Activated T-helper 2 cell treated with anti-CD3 and anti-CD28 coated beads, Interferon-gamma antibody, Interleukin-2, Interleukin-4, amounts not matched to agents 10 μg/mL and 5 μg/mL and 100 μg/mL, durations not matched to agents 14 hours and 24 hours and 36 hours (primary cell): ENCODE measurements at regions of chr6 and their contacts with region 1.

Region 1: DNA sequence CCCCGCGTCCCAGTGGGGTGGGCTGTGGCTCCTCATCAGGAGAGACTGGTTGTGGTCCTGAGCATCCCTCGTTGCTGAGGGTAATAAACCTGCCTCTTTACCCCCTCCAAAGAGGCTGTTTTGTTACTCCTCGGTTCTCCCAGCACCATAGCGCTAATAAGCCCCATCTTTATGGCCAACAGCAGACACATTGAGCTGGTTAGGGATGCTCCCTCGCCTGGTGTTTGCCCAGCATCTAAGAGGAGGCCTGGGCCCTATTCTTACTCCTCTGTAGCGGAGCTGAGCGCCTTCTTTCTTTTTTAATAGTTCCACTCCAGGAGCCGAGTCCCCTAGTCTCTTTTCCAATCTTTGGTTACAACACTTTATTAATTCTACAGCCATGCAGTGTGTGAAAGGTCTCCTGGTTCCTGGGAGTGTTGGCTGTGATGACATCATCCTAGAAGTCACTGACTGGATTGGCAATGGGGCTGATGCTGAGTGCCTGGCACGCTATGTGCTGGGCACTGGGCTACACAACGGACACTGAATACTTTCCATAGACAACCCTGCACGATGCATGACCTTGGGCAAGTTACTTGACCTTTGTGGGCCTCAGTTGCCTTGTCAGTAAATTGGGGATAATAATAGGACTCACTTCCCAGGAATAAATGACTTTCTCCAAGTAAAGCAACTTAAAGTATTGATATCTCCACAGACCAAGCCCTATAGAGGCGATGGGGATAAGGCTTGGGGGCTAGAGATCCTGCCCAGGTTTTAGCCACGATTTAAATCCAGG is 50.7 kb upstream of the CCDC167 start:
- DNase-seq: no peak
- H3K4me3 Mint-ChIP-seq: no peak overlapping the region
- H3K27ac Mint-ChIP-seq: no peak overlapping the region
- H3K4me1 Mint-ChIP-seq: peaks cover 29% of the 10 kb centered on the region
- H3K27me3 Mint-ChIP-seq: peaks cover 2% of the 10 kb centered on the region

Region 2: GRCh38 chr6:37499433-37500293 is 50.7 kb before region 1 on chr6 and contains the start of gene CCDC167:
- intact Hi-C with region 1: loop called (anchors 1 kb)
- DNase-seq: peak; percentile 96
- H3K4me3 Mint-ChIP-seq: peak within 1 kb of the TSS; percentile 93
- H3K27ac Mint-ChIP-seq: peak within 1 kb of the TSS; percentile 96
- H3K4me1 Mint-ChIP-seq: peaks cover 64% of the 10 kb centered on the region
- H3K27me3 Mint-ChIP-seq: no peaks in the 10 kb centered on the region
- total RNA-seq, gene CCDC167: 69.8 and 76.9 TPM in 2 replicates

Region 3: DNA sequence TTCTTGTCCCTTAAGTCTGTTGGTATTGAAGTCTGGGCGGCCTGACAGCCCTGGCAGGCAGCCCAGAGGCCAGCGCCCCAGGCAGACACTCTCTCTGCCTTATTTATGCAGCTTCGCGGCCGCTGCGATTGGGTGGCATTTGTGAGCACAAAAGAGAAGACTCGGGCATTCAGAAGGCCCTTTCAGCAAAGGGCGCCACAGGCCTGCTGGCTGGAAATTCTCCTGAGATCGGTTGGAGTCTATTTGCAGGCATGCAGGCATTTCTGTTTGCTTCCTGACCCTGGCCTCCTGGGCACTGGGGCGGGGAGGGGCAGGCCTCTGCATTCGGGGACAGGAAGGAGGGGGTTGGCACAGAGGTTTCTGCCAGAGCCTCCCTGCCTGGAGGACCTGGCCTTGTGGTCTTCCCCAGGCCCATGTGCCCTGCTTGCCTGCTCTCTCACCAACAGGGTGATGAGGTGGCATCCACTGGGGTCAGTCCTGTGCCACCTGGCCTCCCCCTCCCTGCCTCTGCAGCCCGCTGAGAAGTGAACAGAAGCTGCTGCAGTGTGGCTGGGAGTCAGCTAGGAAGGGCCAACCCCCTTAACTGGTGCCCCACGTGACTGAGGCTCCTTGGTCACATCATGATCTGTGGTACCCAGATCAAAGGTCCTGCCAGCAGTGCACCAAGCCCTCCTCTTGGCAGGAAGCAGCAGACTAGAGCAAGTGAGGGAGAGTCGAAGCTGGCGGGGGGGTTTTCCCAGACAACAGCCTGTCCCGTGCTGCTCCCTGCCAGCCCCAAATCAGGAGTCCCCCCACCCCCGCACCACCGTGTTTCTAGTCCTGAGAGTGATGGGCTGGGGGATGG is 34.1 kb before region 1 on chr6:
- intact Hi-C with region 1: loop called (anchors 1 kb)
- DNase-seq: peak; percentile 79
- H3K4me3 Mint-ChIP-seq: peak overlapping the region; percentile 69
- H3K27ac Mint-ChIP-seq: peak overlapping the region; percentile 86
- H3K4me1 Mint-ChIP-seq: peaks cover 52% of the 10 kb centered on the region
- H3K27me3 Mint-ChIP-seq: no peaks in the 10 kb centered on the region

Region 4: DNA sequence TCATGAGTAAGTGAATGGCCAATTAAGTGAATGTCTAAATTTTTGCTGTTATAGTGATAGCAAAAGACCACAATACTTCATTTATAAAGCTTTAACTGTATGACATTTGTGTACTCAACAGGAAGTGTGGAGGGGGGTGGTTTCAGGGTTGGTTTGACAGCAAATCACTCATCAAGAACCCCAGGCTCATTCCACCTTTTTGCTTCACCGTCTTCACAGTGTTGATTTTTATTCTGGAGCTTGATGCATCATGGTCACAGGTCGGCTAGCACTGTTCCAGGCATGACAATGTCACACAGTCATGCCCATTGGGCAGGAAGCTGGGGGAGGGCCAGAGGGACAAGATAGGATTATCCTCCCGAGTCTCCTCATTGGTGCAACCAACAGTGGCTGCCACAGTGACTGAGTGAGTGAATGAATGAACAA is 72.3 kb after region 1 on chr6:
- intact Hi-C with region 1: loop called (anchors 2 kb)
- DNase-seq: no peak
- H3K4me3 Mint-ChIP-seq: no peak overlapping the region
- H3K27ac Mint-ChIP-seq: peak overlapping the region; percentile 70
- H3K4me1 Mint-ChIP-seq: peaks cover 30% of the 10 kb centered on the region
- H3K27me3 Mint-ChIP-seq: peaks cover 14% of the 10 kb centered on the region

Region 5: GRCh38 chr6:37653933-37654565 is 103.7 kb after region 1 on chr6:
- intact Hi-C with region 1: no loop called
- DNase-seq: peak; percentile 40
- H3K4me3 Mint-ChIP-seq: no peak overlapping the region
- H3K27ac Mint-ChIP-seq: no peak overlapping the region
- H3K4me1 Mint-ChIP-seq: peaks cover 10% of the 10 kb centered on the region
- H3K27me3 Mint-ChIP-seq: peaks cover 23% of the 10 kb centered on the region

Region 6: GRCh38 chr6:37691904-37692806 is 141.8 kb after region 1 on chr6:
- intact Hi-C with region 1: loop called (anchors 10 kb)
- DNase-seq: peak; percentile 64
- H3K4me3 Mint-ChIP-seq: no peak overlapping the region
- H3K27ac Mint-ChIP-seq: no peak overlapping the region
- H3K4me1 Mint-ChIP-seq: peaks cover 22% of the 10 kb centered on the region
- H3K27me3 Mint-ChIP-seq: peaks cover 45% of the 10 kb centered on the region